GM12878 (cell line): ENCODE measurements at regions of chr7 and their contacts with region 1.

Region 1: GRCh38 chr7:152574892-152575640 is 100.9 kb downstream of the XRCC2 start:
- DNase-seq: peak; percentile 56
- ATAC-seq: peak; percentile 96
- H3K4me3 ChIP-seq: 0 out of 2 replicates have a peak overlapping the region, but pooled peaks have one; percentile 5
- H3K27ac ChIP-seq: peak overlapping the region; percentile 35
- H3K4me1 ChIP-seq: no peaks in the 10 kb centered on the region; the same call in 1 of the 2 replicates
- H3K27me3 ChIP-seq: no peaks in the 10 kb centered on the region
- CTCF ChIP-seq: no peak
- EP300 ChIP-seq: peak in 1 of 2 experiments; percentile 62; a peak in 2 of 4 replicates
- POLR2A ChIP-seq: no peak
- RAD21 ChIP-seq: no peak

Region 2: DNA sequence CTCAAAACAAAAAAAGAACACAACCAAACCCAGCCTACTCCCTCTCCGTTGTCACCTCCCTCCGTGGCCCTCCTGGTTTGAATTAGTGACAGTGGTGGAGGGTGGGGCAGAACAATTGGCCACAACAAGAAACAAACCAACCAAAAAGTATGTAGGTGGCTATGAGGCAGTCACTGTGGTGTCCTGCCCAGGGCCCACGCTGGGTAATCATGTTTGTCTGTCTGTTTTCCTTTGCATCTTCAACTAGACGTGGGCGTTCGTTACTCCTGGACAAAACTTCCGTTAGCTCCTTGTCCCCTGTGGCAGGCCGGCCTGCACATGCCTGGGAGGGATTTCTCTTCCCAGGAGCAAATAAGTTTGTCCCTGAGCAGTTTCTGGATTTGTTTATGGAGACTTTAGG is 22.4 kb after region 1 on chr7:
- CTCF ChIA-PET with region 1: no interaction called
- POLR2A ChIA-PET with region 1: interaction called, 4 read pairs
- RAD21 ChIA-PET with region 1: no interaction called
- SMC1A ChIA-PET with region 1: interaction called, 19 read pairs
- in situ Hi-C with region 1: no loop called
- intact Hi-C with region 1: no loop called
- DNase-seq: no peak
- ATAC-seq: peak; percentile 70
- H3K4me3 ChIP-seq: no peak overlapping the region
- H3K27ac ChIP-seq: no peak overlapping the region
- H3K4me1 ChIP-seq: no peaks in the 10 kb centered on the region
- H3K27me3 ChIP-seq: no peaks in the 10 kb centered on the region
- CTCF ChIP-seq: no peak
- EP300 ChIP-seq: no peak
- POLR2A ChIP-seq: no peak
- RAD21 ChIP-seq: no peak

Region 3: GRCh38 chr7:153005750-153006456 is 430.8 kb after region 1 on chr7:
- CTCF ChIA-PET with region 1: no interaction called
- POLR2A ChIA-PET with region 1: no interaction called
- RAD21 ChIA-PET with region 1: no interaction called
- SMC1A ChIA-PET with region 1: no interaction called
- in situ Hi-C with region 1: no loop called
- intact Hi-C with region 1: no loop called
- DNase-seq: no peak
- ATAC-seq: no peak
- H3K4me3 ChIP-seq: no peak overlapping the region
- H3K27ac ChIP-seq: no peak overlapping the region
- H3K4me1 ChIP-seq: no peaks in the 10 kb centered on the region
- H3K27me3 ChIP-seq: no peaks in the 10 kb centered on the region
- CTCF ChIP-seq: no peak
- EP300 ChIP-seq: no peak
- POLR2A ChIP-seq: no peak
- RAD21 ChIP-seq: no peak